Activated naive CD4-positive, alpha-beta T cell treated with anti-CD3 and anti-CD28 coated beads for 36 hours (primary cell): ENCODE measurements at regions of chr4 and their contacts with region 1.

Region 1: DNA sequence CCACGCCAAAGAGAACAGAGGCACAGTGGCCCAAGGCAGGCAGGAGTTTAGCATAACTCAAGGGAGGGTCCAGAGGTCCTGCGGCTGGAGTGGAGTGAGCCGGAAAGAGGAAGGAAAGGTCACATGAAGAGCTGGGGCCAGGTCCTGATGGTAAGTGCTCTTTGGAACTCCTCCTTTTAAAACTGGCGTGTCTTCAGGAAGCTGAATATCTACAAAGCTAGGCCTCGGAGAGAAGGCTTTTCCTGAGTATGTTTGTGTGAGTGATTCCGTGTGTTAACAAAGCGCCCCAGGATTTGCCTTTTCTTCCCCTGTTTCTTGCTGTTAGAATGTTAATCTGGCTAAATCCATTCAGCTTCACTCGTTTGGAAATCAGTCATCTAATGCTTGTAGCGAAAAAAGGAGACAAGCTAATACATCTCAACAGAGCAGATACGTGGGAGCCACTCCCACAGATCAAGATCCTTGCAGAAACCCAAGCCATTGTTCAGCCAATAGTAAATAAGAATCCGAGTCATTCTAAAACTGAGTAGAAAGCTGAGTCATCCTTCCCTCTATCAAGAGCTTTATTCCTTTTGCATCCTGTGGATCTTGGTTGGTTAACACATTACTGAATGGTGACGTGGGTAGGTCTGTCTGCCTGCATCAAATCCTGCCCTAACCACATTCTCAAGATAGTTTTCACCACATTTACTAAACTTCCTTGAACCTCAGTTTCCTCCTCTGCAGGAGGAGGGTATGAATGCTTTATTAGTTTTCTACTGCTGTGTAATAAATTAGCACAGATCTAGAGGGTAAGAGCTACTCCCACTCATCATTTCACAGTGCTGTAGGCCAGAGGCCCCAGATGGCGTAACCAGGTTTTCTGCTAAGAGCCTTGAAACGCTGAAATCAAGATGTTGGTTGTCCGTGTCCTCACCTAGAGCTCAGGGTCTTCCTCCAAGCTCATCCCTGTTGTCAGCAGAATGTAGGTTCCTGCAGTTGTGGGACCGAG is 43.2 kb upstream of the RBM47 start:
- DNase-seq: peak; percentile 67
- H3K4me3 Mint-ChIP-seq: peak overlapping the region; percentile 32
- H3K27ac Mint-ChIP-seq: peak overlapping the region; percentile 86
- H3K4me1 Mint-ChIP-seq: peaks cover 37% of the 10 kb centered on the region
- H3K27me3 Mint-ChIP-seq: no peaks in the 10 kb centered on the region

Region 2: GRCh38 chr4:39883646-39884045 is 789.2 kb before region 1 on chr4:
- CTCF ChIA-PET with region 1: no interaction called
- intact Hi-C with region 1: no loop called
- DNase-seq: no peak
- H3K4me3 Mint-ChIP-seq: no peak overlapping the region
- H3K27ac Mint-ChIP-seq: no peak overlapping the region
- H3K4me1 Mint-ChIP-seq: no peaks in the 10 kb centered on the region
- H3K27me3 Mint-ChIP-seq: no peaks in the 10 kb centered on the region

Region 3: GRCh38 chr4:40438384-40439026 is 234.3 kb before region 1 on chr4:
- CTCF ChIA-PET with region 1: no interaction called
- intact Hi-C with region 1: loop called (anchors 1 kb)
- DNase-seq: no peak
- H3K4me3 Mint-ChIP-seq: no peak overlapping the region
- H3K27ac Mint-ChIP-seq: no peak overlapping the region
- H3K4me1 Mint-ChIP-seq: peaks cover 36% of the 10 kb centered on the region
- H3K27me3 Mint-ChIP-seq: no peaks in the 10 kb centered on the region

Region 4: GRCh38 chr4:40550948-40551462 is 121.8 kb before region 1 on chr4:
- CTCF ChIA-PET with region 1: no interaction called
- intact Hi-C with region 1: loop called (anchors 1 kb)
- DNase-seq: peak; percentile 34
- H3K4me3 Mint-ChIP-seq: peak overlapping the region; percentile 60
- H3K27ac Mint-ChIP-seq: peak overlapping the region; percentile 55
- H3K4me1 Mint-ChIP-seq: peaks cover 28% of the 10 kb centered on the region
- H3K27me3 Mint-ChIP-seq: no peaks in the 10 kb centered on the region

Region 5: GRCh38 chr4:40687676-40688389 is 15.0 kb after region 1 on chr4:
- CTCF ChIA-PET with region 1: interaction called, 4 read pairs
- intact Hi-C with region 1: loop called (anchors 1 kb)
- DNase-seq: no peak
- H3K4me3 Mint-ChIP-seq: no peak overlapping the region
- H3K27ac Mint-ChIP-seq: peak overlapping the region; percentile 50
- H3K4me1 Mint-ChIP-seq: peaks cover 12% of the 10 kb centered on the region
- H3K27me3 Mint-ChIP-seq: no peaks in the 10 kb centered on the region

Region 6: GRCh38 chr4:40763228-40763716 is 90.4 kb after region 1 on chr4:
- CTCF ChIA-PET with region 1: no interaction called
- intact Hi-C with region 1: loop called (anchors 1 kb)
- DNase-seq: peak; percentile 71
- H3K4me3 Mint-ChIP-seq: no peak overlapping the region
- H3K27ac Mint-ChIP-seq: peak overlapping the region; percentile 8
- H3K4me1 Mint-ChIP-seq: peaks cover 11% of the 10 kb centered on the region
- H3K27me3 Mint-ChIP-seq: peaks cover 2% of the 10 kb centered on the region